Dendritic cell treated with granulocyte-macrophage colony-stimulating factor and Interleukin-4, amounts not matched to agents 40 ng/mL and 50 ng/mL, for 4 days (primary cell): ENCODE measurements at regions of chr4 and their contacts with region 1.

Region 1: GRCh38 chr4:38489924-38490639 is 173.9 kb upstream of the KLF3 start:
- H3K4me3 Mint-ChIP-seq: no peak overlapping the region
- H3K27ac Mint-ChIP-seq: peak overlapping the region; percentile 77
- H3K4me1 Mint-ChIP-seq: peaks cover 16% of the 10 kb centered on the region
- H3K27me3 Mint-ChIP-seq: peaks cover 9% of the 10 kb centered on the region

Region 2: GRCh38 chr4:38400946-38401345 is 89.1 kb before region 1 on chr4:
- intact Hi-C with region 1: loop called (anchors 10 kb)
- H3K4me3 Mint-ChIP-seq: no peak overlapping the region
- H3K27ac Mint-ChIP-seq: no peak overlapping the region
- H3K4me1 Mint-ChIP-seq: peaks cover 6% of the 10 kb centered on the region
- H3K27me3 Mint-ChIP-seq: peaks cover under 1% of the 10 kb centered on the region

Region 3: DNA sequence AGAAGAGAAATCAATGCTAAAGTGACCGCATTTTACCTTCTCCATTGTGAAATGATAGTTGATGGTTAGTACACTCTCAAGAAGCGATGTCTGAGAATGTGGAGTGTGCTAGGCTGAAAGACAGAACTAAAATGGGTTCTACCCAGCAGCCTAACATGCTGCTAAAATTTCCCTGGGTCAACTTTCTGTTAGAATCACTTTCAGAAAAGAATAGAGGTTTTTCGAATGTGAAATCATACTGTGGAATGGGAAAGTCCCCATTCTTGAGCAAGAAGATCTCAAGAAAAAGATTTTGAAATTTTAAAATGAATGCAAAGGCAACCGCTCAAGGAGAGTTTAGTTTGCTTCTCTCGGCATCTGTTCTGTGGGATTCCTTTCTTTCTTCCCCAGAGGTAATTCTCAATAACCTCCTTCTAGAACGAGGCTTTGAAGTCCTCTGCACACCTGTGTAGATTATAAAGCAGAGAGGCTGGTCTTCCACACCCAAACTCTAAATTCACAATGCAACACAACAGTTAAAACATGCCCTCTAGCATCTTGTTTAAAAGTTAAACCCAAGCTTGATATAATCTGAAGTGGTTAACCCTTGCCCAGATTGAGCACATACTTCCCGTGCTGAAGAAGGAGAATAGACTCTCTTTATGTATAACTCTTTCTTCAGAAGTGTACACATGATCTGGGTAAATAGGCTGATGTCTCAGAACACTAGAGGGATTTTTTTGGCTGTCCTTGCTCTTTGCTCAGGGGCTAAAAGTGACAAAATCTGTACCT is 34.8 kb before region 1 on chr4:
- intact Hi-C with region 1: no loop called
- H3K4me3 Mint-ChIP-seq: no peak overlapping the region
- H3K27ac Mint-ChIP-seq: no peak overlapping the region
- H3K4me1 Mint-ChIP-seq: peaks cover 32% of the 10 kb centered on the region
- H3K27me3 Mint-ChIP-seq: peaks cover 2% of the 10 kb centered on the region